Right ventricle myocardium inferior (tissue), 1 donor: ENCODE measurements at regions of chr11 and their contacts with region 1.

Region 1: DNA sequence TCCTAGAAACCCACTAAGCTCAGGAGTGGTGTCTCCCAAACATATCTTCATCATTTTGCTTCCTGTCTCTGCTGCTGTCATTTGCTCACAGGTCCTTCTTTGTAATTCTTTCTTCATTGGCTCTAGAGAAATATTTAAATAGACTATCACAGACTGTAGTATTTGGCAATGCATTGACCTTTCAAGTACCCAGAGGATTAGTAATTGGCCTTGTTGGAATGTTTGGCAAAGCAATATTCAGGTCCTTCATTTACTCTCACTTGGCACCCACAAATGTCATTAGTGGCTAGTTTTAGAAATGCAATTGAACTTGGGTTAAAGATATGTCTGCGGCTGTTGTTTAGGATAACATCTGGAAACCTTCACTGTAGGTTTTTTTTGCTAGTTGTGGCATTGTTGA is 11.6 kb downstream of the OR4C5 start:
- DNase-seq: no peak
- ATAC-seq: peak; percentile 71

Region 2: GRCh38 chr11:47946682-47947575 is 407.7 kb before region 1 on chr11:
- intact Hi-C with region 1: no loop called
- DNase-seq: no peak
- ATAC-seq: peak; percentile 77

Region 3: DNA sequence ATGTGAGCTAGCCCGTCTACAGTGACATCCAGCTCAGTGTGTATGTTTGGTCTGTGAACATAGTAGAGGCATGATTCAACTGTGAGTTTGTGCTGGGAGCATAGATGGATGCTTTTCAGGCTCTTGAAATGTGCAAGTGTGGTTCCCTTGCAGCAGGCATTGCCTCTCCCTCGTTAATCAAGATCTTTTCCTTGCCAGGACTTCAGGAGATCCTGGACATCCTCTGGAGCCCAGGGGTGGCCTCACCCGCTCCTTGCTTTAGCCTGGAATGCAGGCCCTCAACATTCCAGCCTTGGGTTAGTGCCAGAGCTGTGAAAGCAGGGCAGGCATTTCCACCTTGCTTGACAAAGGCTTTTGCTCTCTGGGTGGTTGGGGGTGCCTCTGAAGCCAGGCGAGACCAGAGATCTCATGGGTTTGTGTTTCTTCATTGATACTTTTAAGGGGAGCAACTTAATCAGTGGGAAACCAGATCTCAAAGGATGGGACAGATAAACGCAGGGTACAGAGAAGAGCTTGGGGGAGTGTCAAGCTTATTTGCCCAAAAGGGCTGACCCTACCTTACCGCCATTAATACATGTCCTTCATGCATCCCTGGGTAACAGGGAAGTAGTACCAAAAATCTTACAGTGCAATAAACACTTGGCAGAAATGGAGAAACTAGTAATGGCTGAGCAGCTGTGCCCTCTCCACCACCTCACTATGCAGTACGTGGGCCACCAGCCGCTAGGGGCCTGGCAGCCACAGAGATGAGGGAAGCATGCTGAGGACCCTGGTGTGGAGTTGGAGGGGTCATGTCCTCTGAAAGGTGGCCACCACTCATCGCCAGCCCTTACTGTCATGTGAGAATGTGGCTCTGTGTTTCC is 302.3 kb before region 1 on chr11:
- intact Hi-C with region 1: no loop called
- DNase-seq: no peak
- ATAC-seq: peak; percentile 51

Region 4: DNA sequence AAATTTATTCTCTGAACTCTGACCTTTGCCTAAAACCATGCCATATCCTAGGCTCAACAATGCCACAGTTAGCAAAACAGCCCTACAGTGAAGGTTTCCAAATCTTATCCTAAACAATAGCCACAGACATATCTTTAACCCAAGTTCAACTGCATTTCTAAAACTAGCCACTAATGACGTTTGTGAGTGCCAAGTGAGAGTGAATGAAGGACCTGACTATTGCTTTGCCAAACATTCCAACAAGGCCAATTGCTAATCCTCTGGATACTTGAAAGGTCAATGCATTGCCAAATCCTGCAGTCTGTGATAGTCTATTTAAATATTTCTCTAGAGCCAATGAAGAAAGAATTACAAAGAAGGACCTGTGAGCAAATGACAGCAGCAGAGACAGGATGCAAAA is 1675.5 kb after region 1 on chr11:
- intact Hi-C with region 1: loop called (anchors 10 kb)
- DNase-seq: no peak
- ATAC-seq: peak; percentile 89